IMR-90 (cell line): ENCODE measurements at regions of chr14 and their contacts with region 1.

Region 1: GRCh38 chr14:69865701-69866365 is 13.4 kb upstream of the SMOC1 start:
- DNase-seq: no peak
- ATAC-seq: no peak
- H3K4me3 ChIP-seq: no peak overlapping the region
- H3K27ac ChIP-seq: no peak overlapping the region
- H3K4me1 ChIP-seq: no peaks in the 10 kb centered on the region
- H3K27me3 ChIP-seq: peaks cover 6% of the 10 kb centered on the region
- CTCF ChIP-seq: no peak
- POLR2A ChIP-seq: no peak
- RAD21 ChIP-seq: no peak

Region 2: GRCh38 chr14:69387311-69387710 is 478.5 kb before region 1 on chr14:
- CTCF ChIA-PET with region 1: no interaction called
- POLR2A ChIA-PET with region 1: no interaction called
- dilution Hi-C with region 1: no loop called
- in situ Hi-C with region 1: no loop called
- intact Hi-C with region 1: no loop called
- DNase-seq: peak; percentile 25
- ATAC-seq: no peak
- H3K4me3 ChIP-seq: no peak overlapping the region
- H3K27ac ChIP-seq: no peak overlapping the region
- H3K4me1 ChIP-seq: no peaks in the 10 kb centered on the region
- H3K27me3 ChIP-seq: no peaks in the 10 kb centered on the region
- CTCF ChIP-seq: no peak
- POLR2A ChIP-seq: no peak
- RAD21 ChIP-seq: no peak

Region 3: GRCh38 chr14:69913686-69914085 is 47.9 kb after region 1 on chr14:
- CTCF ChIA-PET with region 1: no interaction called
- POLR2A ChIA-PET with region 1: no interaction called
- dilution Hi-C with region 1: no loop called
- in situ Hi-C with region 1: no loop called
- intact Hi-C with region 1: loop called (anchors 1 kb)
- DNase-seq: peak; percentile 71
- ATAC-seq: peak; percentile 87
- H3K4me3 ChIP-seq: no peak overlapping the region
- H3K27ac ChIP-seq: peak overlapping the region; percentile 44; the same call in 1 of the 2 replicates
- H3K4me1 ChIP-seq: peaks cover 10% of the 10 kb centered on the region
- H3K27me3 ChIP-seq: no peaks in the 10 kb centered on the region
- CTCF ChIP-seq: no peak
- POLR2A ChIP-seq: no peak
- RAD21 ChIP-seq: no peak